HepG2 (cell line): ENCODE measurements at regions of chr5 and their contacts with region 1.

Region 1: GRCh38 chr5:95646554-95647431 is at the start of gene RFESD:
- DNase-seq: peak; percentile 96
- ATAC-seq: peak; percentile 98
- H3K4me3 ChIP-seq: peak within 1 kb of the TSS; percentile 31 to 55 (median 39); a peak in 5 of 6 replicates
- H3K27ac ChIP-seq: peak within 1 kb of the TSS; percentile 90
- H3K4me1 ChIP-seq: peaks cover 55% of the 10 kb centered on the region
- H3K27me3 ChIP-seq: no peaks in the 10 kb centered on the region
- CTCF ChIP-seq: peak; percentile 56
- EP300 ChIP-seq: peak; percentile 18 to 53; a peak in 2 of 4 replicates
- POLR2A ChIP-seq: peak; percentile 65 to 85
- RAD21 ChIP-seq: peak; percentile 32; the same call in 1 of the 2 replicates
- total RNA-seq, gene RFESD: 1.2 and 2.2 TPM in 2 replicates

Region 2: DNA sequence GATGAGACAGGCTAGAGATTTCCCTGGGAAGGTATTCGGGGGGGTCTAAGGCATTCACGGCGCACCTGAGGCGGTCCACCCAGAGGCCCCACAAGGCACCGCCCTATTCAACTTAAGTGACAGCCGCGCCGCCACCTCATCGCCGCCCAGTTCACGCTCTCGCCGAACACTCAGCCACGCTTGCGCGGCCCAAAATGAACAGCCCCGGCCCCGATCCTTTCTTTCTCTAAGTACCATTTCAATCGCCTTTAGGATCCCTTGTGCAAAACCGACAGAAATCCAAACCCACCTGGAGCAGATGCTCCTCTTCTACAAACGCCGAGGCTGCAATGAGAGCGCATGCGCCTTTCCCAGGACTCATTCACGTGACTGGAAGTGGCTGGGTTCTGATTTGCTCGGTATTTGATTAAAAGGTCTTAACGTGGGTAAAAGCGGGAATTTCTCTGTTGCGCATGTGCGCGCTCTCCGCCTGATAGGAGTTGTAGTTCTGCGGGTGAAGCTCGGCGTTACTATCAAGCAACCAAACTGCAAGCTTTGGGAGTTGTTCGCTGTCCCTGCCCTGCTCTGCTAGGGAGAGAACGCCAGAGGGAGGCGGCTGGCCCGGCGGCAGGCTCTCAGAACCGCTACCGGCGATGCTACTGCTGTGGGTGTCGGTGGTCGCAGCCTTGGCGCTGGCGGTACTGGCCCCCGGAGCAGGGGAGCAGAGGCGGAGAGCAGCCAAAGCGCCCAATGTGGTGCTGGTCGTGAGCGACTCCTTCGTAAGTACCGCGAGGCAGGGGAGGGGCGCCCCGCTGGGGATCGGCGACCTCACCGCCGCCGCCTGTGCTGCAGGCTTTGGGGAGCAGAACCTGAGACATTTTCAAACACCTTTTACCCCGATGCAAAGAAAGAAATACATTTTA is 91.9 kb before region 1 on chr5 and contains the starts of genes ARSK and SKIC3:
- CTCF ChIA-PET with region 1: no interaction called
- POLR2A ChIA-PET with region 1: interaction called, 5 read pairs
- in situ Hi-C with region 1: no loop called
- intact Hi-C with region 1: loop called (anchors 10 kb)
- DNase-seq: peak; percentile 97
- ATAC-seq: peak; percentile 97
- H3K4me3 ChIP-seq: peak within 1 kb of the TSS; percentile 80 to 92 (median 85)
- H3K27ac ChIP-seq: peak within 1 kb of the TSS; percentile 92
- H3K4me1 ChIP-seq: peaks cover 32% of the 10 kb centered on the region
- H3K27me3 ChIP-seq: no peaks in the 10 kb centered on the region; a peak in 1 of 5 replicates
- CTCF ChIP-seq: peak; percentile 51
- EP300 ChIP-seq: no peak
- POLR2A ChIP-seq: peak; percentile 80 to 84; a peak in 3 of 4 replicates
- RAD21 ChIP-seq: peak; percentile 60; the same call in 1 of the 2 replicates
- total RNA-seq, gene ARSK: 5.9 and 7.9 TPM in 2 replicates
- total RNA-seq, gene SKIC3: 61.5 and 86.9 TPM in 2 replicates

Region 3: GRCh38 chr5:95583992-95584391 is 62.8 kb before region 1 on chr5:
- CTCF ChIA-PET with region 1: no interaction called
- POLR2A ChIA-PET with region 1: no interaction called
- in situ Hi-C with region 1: no loop called
- intact Hi-C with region 1: no loop called
- DNase-seq: no peak
- ATAC-seq: no peak
- H3K4me3 ChIP-seq: no peak overlapping the region
- H3K27ac ChIP-seq: no peak overlapping the region
- H3K4me1 ChIP-seq: no peaks in the 10 kb centered on the region
- H3K27me3 ChIP-seq: no peaks in the 10 kb centered on the region; a peak in 1 of 5 replicates
- CTCF ChIP-seq: no peak
- EP300 ChIP-seq: no peak
- POLR2A ChIP-seq: no peak
- RAD21 ChIP-seq: no peak

Region 4: GRCh38 chr5:95609711-95610110 is 37.1 kb before region 1 on chr5:
- CTCF ChIA-PET with region 1: no interaction called
- POLR2A ChIA-PET with region 1: no interaction called
- in situ Hi-C with region 1: no loop called
- intact Hi-C with region 1: no loop called
- DNase-seq: no peak
- ATAC-seq: no peak
- H3K4me3 ChIP-seq: no peak overlapping the region
- H3K27ac ChIP-seq: no peak overlapping the region
- H3K4me1 ChIP-seq: peaks cover 8% of the 10 kb centered on the region; the same call in 1 of the 2 replicates
- H3K27me3 ChIP-seq: no peaks in the 10 kb centered on the region; a peak in 1 of 5 replicates
- CTCF ChIP-seq: no peak
- EP300 ChIP-seq: no peak
- POLR2A ChIP-seq: no peak
- RAD21 ChIP-seq: no peak

Region 5: DNA sequence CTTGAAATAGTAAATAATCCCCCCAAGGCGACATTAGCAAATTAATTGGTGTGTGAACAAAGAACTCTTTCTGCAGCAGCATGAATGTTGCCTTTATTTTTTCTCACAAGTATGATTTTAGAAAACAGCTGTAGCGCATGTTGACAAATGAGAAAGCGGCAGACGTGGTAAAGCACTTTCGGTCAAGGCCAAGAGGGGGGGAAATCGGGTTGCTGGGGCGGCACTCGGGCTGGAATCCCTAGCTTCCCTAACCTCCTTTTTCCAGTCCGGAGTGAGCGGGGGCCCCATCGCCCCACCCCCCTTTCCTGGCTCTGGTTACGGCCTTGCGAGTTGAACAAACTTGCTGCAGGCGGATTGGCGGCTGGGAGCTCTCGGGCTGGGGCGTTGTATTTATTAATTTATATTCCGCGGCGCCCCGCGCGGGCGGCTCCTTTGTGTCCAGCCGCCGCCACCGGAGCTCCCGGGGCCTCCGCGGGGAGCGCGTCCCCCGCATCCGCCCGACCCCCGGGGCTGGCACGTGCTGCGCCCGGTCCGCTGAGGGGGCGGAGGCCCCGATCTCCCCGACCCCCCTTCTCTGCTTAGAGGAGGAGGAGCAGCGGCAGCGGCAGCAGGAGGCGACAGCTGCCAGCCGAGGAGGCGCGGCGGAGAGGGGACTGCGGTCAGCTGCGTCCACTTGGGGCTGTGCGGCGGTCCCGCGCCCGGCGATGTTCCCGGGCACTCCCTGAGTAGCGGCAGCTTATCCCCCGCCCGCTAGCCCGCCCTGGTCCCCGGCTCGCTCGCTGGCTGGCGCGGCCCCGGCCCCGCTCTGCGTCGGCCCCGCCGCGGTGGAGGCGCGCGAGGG is 84.2 kb after region 1 on chr5 and contains the start of gene RHOBTB3:
- CTCF ChIA-PET with region 1: no interaction called
- POLR2A ChIA-PET with region 1: interaction called, 14 read pairs
- in situ Hi-C with region 1: no loop called
- intact Hi-C with region 1: loop called (anchors 5 kb)
- DNase-seq: peak; percentile 79
- ATAC-seq: peak; percentile 87
- H3K4me3 ChIP-seq: peak within 1 kb of the TSS; percentile 80 to 93 (median 87)
- H3K27ac ChIP-seq: peak within 1 kb of the TSS; percentile 65
- H3K4me1 ChIP-seq: peaks cover 72% of the 10 kb centered on the region
- H3K27me3 ChIP-seq: no peaks in the 10 kb centered on the region
- CTCF ChIP-seq: peak; percentile 17; the same call in 1 of the 2 replicates
- EP300 ChIP-seq: peak in 1 of 2 experiments; percentile 49; a peak in 1 of 4 replicates
- POLR2A ChIP-seq: peak; percentile 41 to 44; a peak in 2 of 4 replicates
- RAD21 ChIP-seq: peak; percentile 49; the same call in 1 of the 2 replicates
- total RNA-seq, gene RHOBTB3: 35.4 and 39.6 TPM in 2 replicates

Region 6: DNA sequence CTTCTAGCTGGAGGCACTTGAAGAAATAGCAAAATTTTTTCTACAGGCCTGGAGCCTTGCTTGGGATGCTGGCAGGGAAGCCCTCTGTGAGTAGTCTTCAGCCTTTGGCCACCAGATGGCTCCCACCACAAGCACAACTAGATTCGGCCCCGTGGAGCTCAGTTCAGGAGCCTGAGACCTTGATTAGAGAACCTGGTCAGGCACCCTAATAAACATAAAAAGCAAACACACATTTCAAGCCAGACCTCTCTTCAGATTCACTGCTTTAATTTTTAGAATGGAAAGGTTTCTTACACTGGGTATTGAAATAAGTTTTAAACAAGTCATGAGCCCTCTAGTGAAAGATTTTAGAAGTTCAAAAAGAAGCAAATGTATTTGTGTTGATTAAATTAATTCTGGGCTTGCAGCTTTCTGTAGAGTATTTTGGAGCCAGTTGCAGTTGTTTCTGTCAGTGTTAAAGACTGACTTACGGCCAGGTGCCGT is 134.3 kb after region 1 on chr5:
- CTCF ChIA-PET with region 1: interaction called, 4 read pairs
- POLR2A ChIA-PET with region 1: interaction called, 4 read pairs
- in situ Hi-C with region 1: no loop called
- intact Hi-C with region 1: loop called (anchors 1 kb)
- DNase-seq: peak; percentile 73
- ATAC-seq: peak; percentile 100
- H3K4me3 ChIP-seq: no peak overlapping the region
- H3K27ac ChIP-seq: no peak overlapping the region
- H3K4me1 ChIP-seq: peaks cover 6% of the 10 kb centered on the region; the same call in 1 of the 2 replicates
- H3K27me3 ChIP-seq: no peaks in the 10 kb centered on the region
- CTCF ChIP-seq: peak; percentile 89
- EP300 ChIP-seq: no peak
- POLR2A ChIP-seq: no peak
- RAD21 ChIP-seq: peak; percentile 94

Region 7: DNA sequence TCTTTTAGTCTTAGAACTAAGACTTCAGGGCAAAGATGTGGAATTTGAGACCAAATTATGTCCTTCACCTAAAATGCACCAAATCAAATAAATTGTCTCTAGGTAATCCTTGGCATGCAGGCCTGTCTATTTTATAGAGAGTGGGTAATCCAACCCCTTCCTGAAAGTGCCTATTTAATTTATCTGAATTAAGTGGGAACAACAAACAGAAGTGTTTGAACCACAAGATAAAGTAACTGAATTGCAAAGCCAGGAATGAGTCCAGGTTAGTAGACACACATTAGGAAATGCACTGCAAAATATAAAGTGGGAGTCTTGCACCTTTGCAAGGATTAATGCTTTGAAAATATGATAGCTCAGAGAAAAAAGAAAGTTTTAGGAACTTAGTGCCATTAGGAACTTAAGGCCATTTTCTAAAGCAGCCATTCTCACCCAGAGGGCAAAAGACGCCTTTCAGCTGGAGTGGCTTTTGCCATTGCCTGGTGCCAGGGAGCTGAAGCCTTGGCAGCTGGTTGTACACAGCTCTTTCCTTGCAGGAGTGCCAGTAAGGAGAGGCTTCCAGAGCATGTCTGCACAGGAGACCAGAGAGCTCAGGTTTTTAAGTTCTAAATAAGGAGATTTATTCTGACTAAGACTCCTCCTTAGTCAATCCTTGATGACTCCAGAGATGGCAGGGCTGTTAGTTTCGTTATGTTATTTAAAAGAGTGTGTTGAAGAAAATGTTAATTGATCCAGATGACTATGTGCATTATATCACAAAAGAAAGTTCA is 466.6 kb after region 1 on chr5:
- CTCF ChIA-PET with region 1: no interaction called
- POLR2A ChIA-PET with region 1: no interaction called
- in situ Hi-C with region 1: no loop called
- intact Hi-C with region 1: loop called (anchors 10 kb)
- DNase-seq: no peak
- ATAC-seq: no peak
- H3K4me3 ChIP-seq: no peak overlapping the region
- H3K27ac ChIP-seq: no peak overlapping the region
- H3K4me1 ChIP-seq: peaks cover 89% of the 10 kb centered on the region
- H3K27me3 ChIP-seq: no peaks in the 10 kb centered on the region
- CTCF ChIP-seq: no peak
- EP300 ChIP-seq: no peak
- POLR2A ChIP-seq: no peak
- RAD21 ChIP-seq: no peak

Region 8: DNA sequence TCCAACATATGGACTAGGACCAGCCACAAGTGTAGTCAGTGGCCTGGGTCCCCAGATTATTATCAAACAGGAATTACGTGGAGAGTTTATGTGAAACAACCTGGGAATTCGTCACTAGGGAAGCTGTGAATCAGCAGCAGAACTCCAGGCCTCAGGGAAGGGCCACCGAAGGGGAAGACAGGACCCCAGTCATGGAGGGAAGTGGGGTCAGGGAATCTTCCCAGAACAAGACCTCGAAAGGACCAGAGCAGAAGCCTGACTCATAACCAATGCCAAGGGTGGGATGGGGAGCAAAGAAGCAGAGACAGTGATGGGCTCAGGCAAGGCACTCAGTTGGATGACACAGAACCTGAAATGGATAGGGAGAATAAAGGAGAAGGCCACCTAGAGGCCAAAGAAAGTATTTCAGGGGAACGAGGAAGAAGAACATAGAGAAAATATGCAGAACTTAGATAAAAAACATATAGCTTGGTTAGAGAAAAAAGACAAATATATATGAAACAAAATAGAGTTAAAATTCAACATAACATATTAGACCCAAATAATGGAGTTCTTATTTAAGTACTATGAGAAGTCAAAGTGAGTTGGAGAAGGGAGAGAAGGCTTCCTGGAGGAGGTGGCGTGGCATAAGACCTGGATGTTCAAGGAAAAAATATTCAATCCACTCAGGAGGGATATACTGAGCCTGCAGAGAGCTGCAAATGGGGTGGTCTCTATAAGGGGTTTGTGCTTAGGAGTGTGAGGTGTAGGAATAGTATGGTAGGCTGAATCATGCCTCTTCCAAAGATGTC is 948.7 kb after region 1 on chr5:
- CTCF ChIA-PET with region 1: no interaction called
- POLR2A ChIA-PET with region 1: no interaction called
- in situ Hi-C with region 1: no loop called
- intact Hi-C with region 1: loop called (anchors 10 kb)
- DNase-seq: peak; percentile 10
- ATAC-seq: peak; percentile 32; the same call in 1 of the 3 replicates
- H3K4me3 ChIP-seq: no peak overlapping the region
- H3K27ac ChIP-seq: no peak overlapping the region
- H3K4me1 ChIP-seq: no peaks in the 10 kb centered on the region
- H3K27me3 ChIP-seq: peaks cover 0 to 5% of the 10 kb centered on the region in 2 experiments; a peak in 1 of 5 replicates
- CTCF ChIP-seq: no peak
- EP300 ChIP-seq: no peak
- POLR2A ChIP-seq: no peak
- RAD21 ChIP-seq: no peak